Mucosa of descending colon (tissue), 3 donors: ENCODE measurements at regions of chr2 and their contacts with region 1.

Region 1: GRCh38 chr2:198127627-198128026 is 323.2 kb downstream of the PLCL1 start:
- DNase-seq: peak in 2 of 3 donors; percentile 16 to 19
- ATAC-seq: peak; percentile 43
- H3K4me3 ChIP-seq: no peak overlapping the region
- H3K4me1 ChIP-seq: no peaks in the 10 kb centered on the region
- CTCF ChIP-seq: no peak

Region 2: GRCh38 chr2:197799068-197799467 is 328.6 kb before region 1 on chr2:
- intact Hi-C with region 1: loop called (anchors 2 to 10 kb)
- DNase-seq: no peak
- ATAC-seq: no peak
- H3K4me3 ChIP-seq: no peak overlapping the region
- H3K4me1 ChIP-seq: peaks cover 6% of the 10 kb centered on the region
- CTCF ChIP-seq: no peak

Region 3: DNA sequence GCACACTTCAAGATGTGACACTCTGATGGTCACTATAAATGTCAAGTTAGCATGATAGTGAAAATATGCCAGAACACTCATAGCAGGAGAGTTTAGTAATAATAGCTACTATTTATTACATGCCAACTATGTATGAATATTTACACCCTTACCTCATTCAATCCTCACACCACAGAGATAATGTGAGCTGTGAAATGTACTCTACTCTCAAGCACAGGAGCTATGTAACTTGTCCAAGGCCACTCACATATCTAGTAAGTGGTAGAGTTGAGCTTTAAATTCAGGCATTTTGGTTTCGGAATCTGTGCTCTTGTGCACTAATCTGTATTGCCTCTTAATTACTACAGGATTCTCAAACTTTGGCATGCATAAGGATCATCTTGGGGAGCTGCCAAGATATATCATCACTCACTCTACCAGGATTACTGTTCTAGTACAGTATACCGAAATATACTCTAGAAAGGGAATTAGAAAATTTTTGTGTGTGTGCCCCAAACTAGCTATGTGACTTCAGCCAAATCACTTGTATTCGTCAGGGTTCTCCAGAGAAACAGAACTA is 169.0 kb before region 1 on chr2:
- intact Hi-C with region 1: no loop called
- DNase-seq: no peak
- ATAC-seq: no peak
- H3K4me3 ChIP-seq: no peak overlapping the region
- H3K4me1 ChIP-seq: no peaks in the 10 kb centered on the region
- CTCF ChIP-seq: no peak

Region 4: DNA sequence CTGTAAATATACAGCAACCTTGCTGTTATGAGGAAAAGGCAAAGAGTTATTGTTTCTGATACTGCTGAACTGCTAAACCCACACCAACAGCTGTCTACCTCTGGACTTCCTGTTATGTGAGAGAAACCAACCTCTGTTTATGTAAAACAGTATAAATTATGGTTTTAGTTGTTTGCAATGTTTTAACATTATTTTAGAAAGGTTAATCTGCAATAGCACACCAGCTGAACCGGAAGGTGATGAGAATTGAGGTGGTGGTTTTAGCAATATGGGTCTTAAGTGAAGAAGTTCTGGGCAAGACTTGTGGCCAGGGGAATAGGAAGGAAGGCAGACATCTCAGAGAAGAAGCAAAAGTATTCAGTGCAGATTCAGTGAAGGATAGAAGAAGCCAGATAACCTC is 85.4 kb before region 1 on chr2:
- intact Hi-C with region 1: no loop called
- DNase-seq: no peak
- ATAC-seq: peak; percentile 37
- H3K4me3 ChIP-seq: no peak overlapping the region
- H3K4me1 ChIP-seq: no peaks in the 10 kb centered on the region
- CTCF ChIP-seq: no peak